PC-9 (cell line): ENCODE measurements at regions of chr2 and their contacts with region 1.

Region 1: GRCh38 chr2:234425619-234426603 is 71.0 kb downstream of the ARL4C start:
- DNase-seq: peak; percentile 83 to 85
- H3K4me3 ChIP-seq: no peak overlapping the region
- H3K27ac ChIP-seq: peak overlapping the region; percentile 44
- H3K4me1 ChIP-seq: peaks cover 68% of the 10 kb centered on the region
- H3K27me3 ChIP-seq: no peaks in the 10 kb centered on the region
- CTCF ChIP-seq: no peak

Region 2: GRCh38 chr2:233690435-233690834 is 735.5 kb before region 1 on chr2:
- CTCF ChIA-PET with region 1: no interaction called
- POLR2A ChIA-PET with region 1: no interaction called
- intact Hi-C with region 1: loop called (anchors 10 kb)
- DNase-seq: peak; percentile 96 to 99
- H3K4me3 ChIP-seq: peak overlapping the region; percentile 69; the same call in 1 of the 2 replicates
- H3K27ac ChIP-seq: peak overlapping the region; percentile 97
- H3K4me1 ChIP-seq: peaks cover 37% of the 10 kb centered on the region
- H3K27me3 ChIP-seq: no peaks in the 10 kb centered on the region
- CTCF ChIP-seq: no peak

Region 3: DNA sequence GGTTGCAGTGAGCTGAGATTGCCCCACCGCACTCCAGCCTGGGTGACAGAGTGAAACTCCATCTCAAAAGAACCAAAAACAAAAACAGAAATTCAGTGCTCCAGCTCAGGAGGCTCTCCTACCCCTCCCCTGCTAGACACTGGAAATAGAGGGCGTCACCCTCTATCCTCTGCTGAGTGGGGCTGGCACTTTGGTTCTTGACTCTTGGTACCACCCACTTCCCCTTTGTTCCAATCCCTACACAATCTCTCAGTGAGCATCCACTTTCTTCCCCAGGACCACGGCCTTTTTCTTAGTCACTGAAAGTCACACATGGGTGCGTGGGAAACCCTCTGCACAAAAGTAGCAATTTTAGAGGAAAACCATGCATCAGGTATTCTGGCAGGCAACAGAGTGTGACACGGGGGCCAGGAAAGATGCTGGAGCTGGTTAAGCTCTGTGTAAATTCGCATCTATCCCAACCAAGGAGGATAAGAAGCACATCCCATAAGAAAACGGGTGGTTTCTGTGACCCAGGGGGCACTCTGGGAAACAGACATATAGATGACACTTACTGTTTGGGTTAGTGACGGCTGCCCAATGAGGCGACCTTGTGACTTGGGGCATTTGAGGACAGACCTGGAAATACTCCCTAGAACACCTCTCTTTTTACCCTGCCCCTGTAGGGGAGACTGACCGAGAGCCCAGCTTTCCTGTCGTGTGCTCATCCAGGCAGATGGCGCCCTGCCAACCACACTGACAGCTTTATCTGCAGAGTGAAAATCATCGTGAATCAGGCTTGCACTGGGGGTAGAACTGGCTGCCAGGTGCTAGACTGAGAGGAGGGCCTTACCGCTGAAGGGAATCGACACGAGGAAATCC is 579.3 kb before region 1 on chr2:
- CTCF ChIA-PET with region 1: no interaction called
- POLR2A ChIA-PET with region 1: no interaction called
- intact Hi-C with region 1: no loop called
- DNase-seq: no peak
- H3K4me3 ChIP-seq: no peak overlapping the region
- H3K27ac ChIP-seq: no peak overlapping the region
- H3K4me1 ChIP-seq: peaks cover 5% of the 10 kb centered on the region; the same call in 1 of the 2 replicates
- H3K27me3 ChIP-seq: no peaks in the 10 kb centered on the region
- CTCF ChIP-seq: no peak

Region 4: DNA sequence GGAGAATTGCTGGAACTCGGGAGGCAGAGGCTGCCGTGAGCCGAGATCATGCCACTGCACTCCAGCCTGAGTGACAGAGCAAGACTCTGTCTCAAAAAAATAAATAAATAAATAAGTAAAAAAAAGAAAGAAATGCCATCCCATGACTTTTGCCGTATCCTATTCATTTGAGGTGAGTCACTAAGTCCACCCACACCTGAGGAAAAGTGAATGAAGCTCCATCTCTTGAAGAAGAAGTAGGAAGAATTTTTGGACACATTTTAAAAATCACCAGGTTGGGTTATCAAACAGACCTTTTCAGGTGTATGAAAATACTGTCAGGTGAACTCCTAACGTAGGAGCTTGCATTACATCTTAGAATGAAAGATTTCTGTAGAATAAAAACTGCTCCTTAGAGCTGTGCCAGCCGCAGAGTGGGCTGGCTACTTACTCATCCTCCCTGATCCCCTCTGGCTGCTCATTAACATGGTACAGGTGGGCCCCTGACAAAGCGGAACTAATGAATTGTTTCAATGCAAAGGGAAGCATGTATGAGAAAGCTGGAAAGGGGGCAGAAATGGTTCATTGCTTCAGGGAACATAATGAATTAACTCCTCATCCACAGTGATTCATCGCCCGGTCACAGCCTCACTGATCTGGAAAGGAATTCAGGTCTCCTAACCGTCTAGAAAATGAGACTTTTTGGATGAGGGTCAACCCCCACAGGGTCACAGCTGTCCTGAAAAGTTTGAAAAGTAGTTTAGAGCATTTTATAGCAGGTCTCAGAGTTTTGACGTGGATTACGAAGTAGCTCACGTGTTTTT is 184.1 kb before region 1 on chr2:
- CTCF ChIA-PET with region 1: no interaction called
- POLR2A ChIA-PET with region 1: interaction called, 19 read pairs
- intact Hi-C with region 1: no loop called
- DNase-seq: peak; percentile 68 to 95
- H3K4me3 ChIP-seq: peak overlapping the region; percentile 36; the same call in 1 of the 2 replicates
- H3K27ac ChIP-seq: peak overlapping the region; percentile 91
- H3K4me1 ChIP-seq: peaks cover 68% of the 10 kb centered on the region
- H3K27me3 ChIP-seq: no peaks in the 10 kb centered on the region
- CTCF ChIP-seq: no peak

Region 5: GRCh38 chr2:234304945-234305344 is 121.0 kb before region 1 on chr2:
- CTCF ChIA-PET with region 1: interaction called, 5 read pairs
- POLR2A ChIA-PET with region 1: interaction called, 9 read pairs
- intact Hi-C with region 1: loop called (anchors 2 kb)
- DNase-seq: peak; percentile 79 to 95
- H3K4me3 ChIP-seq: no peak overlapping the region
- H3K27ac ChIP-seq: peak overlapping the region; percentile 60
- H3K4me1 ChIP-seq: peaks cover 43% of the 10 kb centered on the region
- H3K27me3 ChIP-seq: no peaks in the 10 kb centered on the region
- CTCF ChIP-seq: no peak

Region 6: DNA sequence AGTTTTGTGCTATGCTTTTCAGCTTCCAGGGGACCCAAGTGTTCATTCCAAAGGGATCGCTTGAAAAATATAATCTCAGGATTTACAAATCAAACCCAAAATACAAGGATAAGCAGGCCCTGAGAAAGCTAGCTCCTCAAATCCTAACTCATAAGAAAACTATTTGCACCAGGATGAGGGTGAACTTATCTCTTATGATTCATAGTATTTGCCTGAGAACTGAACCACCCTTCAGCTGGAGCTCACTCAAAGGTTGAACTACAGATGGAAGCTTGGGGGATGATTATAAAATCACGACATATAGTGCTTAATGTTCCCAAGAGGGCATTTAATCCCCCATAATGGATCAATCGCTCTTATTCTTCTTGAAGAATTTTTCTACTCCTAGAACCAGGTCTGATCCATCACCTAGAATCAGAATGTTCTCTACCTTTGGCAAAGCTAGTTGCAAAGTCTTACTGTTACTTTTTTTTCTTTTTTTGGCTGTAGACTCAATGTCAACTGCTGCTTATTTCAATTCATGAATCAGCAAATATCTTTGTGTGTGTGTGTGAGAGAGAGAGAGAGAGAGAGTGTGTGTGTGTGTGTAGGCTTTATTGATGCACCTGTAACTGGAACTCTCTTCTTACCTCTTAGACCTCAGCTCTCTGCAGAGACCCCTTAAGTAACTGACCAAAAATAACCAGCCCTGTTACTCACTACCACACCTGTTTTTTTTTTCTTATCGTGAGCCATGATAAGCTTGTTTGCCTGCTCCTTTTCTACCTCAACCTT is 26.1 kb after region 1 on chr2:
- CTCF ChIA-PET with region 1: no interaction called
- POLR2A ChIA-PET with region 1: interaction called, 12 read pairs
- intact Hi-C with region 1: loop called (anchors 2 kb)
- DNase-seq: peak; percentile 36 to 91
- H3K4me3 ChIP-seq: no peak overlapping the region
- H3K27ac ChIP-seq: peak overlapping the region; percentile 72
- H3K4me1 ChIP-seq: peaks cover 28% of the 10 kb centered on the region
- H3K27me3 ChIP-seq: no peaks in the 10 kb centered on the region
- CTCF ChIP-seq: no peak

Region 7: DNA sequence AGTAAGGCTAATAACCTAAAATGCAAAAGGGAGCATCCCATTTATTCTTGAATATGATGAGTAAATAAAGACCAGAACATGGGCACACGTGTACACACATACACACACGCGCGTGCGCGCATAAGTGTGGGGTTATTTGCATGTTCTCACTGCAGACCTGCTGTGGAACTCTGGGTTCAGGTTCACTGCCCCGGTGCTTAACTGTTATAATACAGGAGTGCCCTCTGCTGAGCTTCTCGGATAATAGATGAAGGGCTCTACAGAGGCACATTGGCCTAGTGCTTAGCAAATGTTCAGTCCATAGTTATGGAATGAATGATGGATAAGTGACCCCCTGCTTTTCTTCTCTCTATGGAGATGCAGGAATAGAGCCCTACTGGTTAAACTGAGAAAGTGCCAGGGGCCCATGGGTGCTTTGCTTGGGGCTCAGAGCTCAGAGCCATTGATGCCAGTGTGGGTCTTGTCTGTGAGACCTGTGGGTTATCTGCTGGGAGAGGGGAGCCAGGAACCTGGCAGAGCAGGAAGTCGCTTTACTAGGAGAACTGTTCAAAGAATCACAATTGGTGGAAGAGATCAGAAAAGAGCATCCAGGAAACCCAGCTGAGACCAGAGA is 74.6 kb after region 1 on chr2:
- CTCF ChIA-PET with region 1: no interaction called
- POLR2A ChIA-PET with region 1: interaction called, 31 read pairs
- intact Hi-C with region 1: no loop called
- DNase-seq: peak; percentile 46 to 57
- H3K4me3 ChIP-seq: no peak overlapping the region
- H3K27ac ChIP-seq: no peak overlapping the region
- H3K4me1 ChIP-seq: peaks cover 17% of the 10 kb centered on the region
- H3K27me3 ChIP-seq: no peaks in the 10 kb centered on the region
- CTCF ChIP-seq: peak; percentile 70

Region 8: DNA sequence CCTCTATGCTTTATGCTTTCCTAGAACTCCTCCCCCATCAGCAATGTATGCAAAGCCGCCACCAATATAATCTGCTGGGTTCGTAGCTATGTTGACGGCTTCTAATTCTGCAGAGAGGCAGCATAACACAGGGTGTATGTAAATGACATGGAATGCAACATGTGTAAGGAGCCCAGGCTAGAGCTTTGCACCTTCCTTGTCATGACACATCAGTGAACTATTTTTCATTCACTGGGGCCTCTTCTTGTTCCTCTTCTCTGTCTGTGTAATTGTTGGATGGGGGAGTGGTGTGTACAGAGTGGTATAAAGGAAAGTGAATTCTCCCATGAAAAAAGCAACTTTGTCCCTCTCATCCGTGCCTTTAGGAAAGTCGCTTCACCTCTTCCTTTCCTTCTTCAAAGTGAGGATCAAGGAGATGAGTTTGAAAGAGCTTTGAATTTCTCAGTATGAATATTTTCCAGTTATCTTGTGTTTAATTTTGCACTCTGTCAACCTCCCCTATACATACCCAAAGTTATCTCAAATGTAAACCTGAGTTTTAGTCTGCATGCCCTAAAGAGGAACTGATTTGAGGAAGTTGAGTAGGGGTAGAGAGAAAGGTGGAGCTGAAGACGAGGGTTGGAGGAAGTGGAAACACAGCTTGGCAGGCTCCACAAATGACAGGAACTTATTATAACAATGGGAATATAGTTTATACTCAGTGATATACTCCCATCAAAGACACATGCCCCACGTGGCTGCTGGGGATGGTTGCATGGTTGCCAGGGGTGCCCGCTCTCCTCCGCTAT is 145.9 kb after region 1 on chr2:
- CTCF ChIA-PET with region 1: no interaction called
- POLR2A ChIA-PET with region 1: no interaction called
- intact Hi-C with region 1: no loop called
- DNase-seq: no peak
- H3K4me3 ChIP-seq: no peak overlapping the region
- H3K27ac ChIP-seq: no peak overlapping the region
- H3K4me1 ChIP-seq: no peaks in the 10 kb centered on the region
- H3K27me3 ChIP-seq: no peaks in the 10 kb centered on the region
- CTCF ChIP-seq: no peak